Activated CD8-positive, alpha-beta T cell treated with anti-CD3 and anti-CD28 coated beads for 36 hours (primary cell): ENCODE measurements at regions of chr6 and their contacts with region 1.

Region 1: DNA sequence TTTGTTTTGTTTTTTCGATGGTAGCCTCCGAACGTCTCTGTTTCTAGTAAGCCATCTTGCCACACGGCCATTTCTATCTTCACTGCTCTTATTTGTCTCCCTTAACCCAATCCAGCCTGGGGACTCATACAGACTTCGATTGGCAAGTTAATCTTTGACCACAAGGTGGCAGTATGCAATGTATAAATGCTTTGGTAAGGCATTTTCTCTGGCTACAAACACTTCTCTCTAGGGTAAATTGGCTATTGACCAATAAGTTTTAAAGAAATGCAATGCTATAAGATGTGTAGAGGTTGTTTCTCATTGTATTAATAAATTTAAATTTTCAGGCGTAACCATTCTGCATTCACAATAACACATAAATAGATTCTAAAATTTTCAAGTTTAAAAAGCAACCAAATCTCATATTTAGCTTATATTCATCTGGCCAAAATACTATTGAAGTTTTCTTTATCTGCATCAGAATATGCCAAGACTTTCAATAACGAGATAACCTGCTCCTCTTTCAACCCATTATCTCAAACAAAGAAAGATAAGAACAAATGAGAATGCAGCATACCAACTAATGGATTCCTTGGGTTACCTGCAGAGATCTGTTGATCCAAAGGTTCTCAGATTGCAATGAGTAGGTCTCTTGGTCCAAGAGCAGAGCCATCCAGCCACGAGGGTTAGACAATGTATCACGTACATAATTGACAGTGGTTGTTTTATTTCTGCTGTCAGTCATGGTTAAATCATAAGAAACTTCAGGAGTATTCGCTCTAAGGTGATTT is 231.9 kb downstream of the PKHD1 start:
- DNase-seq: peak; percentile 35
- ATAC-seq: no peak
- H3K4me3 Mint-ChIP-seq: no peak overlapping the region
- H3K27ac Mint-ChIP-seq: no peak overlapping the region
- H3K4me1 Mint-ChIP-seq: no peaks in the 10 kb centered on the region
- H3K27me3 Mint-ChIP-seq: peaks cover 5% of the 10 kb centered on the region
- CTCF ChIP-seq: peak; percentile 74

Region 2: DNA sequence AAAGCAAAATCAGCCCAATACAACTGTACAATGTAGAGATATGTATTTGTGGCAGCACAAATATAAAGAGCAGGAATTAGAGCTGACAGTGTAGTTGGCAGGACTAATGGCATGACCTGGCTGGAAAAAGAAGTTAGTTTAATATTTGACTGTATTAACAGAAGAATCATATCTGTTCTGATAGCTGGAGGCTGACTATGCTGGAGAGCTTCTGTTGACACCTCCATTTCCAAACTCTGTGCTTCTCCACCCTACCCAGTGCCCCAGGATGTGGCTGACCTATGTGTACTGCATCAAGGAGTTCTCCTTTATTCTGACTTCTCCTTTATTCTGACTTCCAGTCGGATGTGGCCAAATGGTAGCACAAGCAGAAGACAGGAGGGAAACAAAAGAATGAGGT is 67.4 kb before region 1 on chr6:
- CTCF ChIA-PET with region 1: no interaction called
- POLR2A ChIA-PET with region 1: no interaction called
- intact Hi-C with region 1: no loop called
- DNase-seq: no peak
- ATAC-seq: no peak
- H3K4me3 Mint-ChIP-seq: no peak overlapping the region
- H3K27ac Mint-ChIP-seq: no peak overlapping the region
- H3K4me1 Mint-ChIP-seq: no peaks in the 10 kb centered on the region
- H3K27me3 Mint-ChIP-seq: no peaks in the 10 kb centered on the region
- CTCF ChIP-seq: no peak

Region 3: DNA sequence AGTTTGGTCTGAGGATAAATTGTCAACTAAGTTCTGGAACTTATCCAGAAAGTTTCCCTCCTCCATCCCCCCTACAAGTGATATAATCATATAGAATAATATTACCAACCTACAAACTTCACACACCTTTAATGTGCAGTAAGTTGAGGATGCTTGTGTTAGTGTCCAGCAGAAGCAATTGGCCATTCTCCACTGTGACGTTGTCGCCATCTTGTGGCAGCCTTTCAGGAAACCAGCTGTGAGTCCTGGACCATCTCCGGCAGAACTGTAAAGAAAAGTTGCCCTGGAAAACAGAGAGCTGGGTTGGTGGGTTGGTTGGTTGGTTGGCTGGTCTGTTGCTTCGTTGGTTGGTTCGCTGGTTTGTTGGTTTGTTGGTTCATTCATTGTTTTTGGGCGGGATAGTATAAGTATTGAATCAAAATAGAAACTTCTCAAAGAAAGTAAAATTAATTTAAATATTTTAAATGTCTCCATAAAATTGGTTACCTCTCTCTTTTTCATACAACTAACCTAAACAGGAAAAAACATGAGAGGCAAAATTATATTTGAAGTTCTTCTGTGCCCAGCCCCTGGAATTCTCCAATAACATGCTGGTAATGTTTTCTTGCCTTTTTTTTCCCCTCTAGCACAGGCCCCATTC is 104.4 kb after region 1 on chr6:
- CTCF ChIA-PET with region 1: interaction called, 5 read pairs
- POLR2A ChIA-PET with region 1: no interaction called
- intact Hi-C with region 1: loop called (anchors 5 kb)
- DNase-seq: peak; percentile 71
- ATAC-seq: no peak
- H3K4me3 Mint-ChIP-seq: no peak overlapping the region
- H3K27ac Mint-ChIP-seq: no peak overlapping the region
- H3K4me1 Mint-ChIP-seq: no peaks in the 10 kb centered on the region
- H3K27me3 Mint-ChIP-seq: peaks cover 5% of the 10 kb centered on the region
- CTCF ChIP-seq: peak; percentile 32